RWPE1 (cell line): ENCODE measurements at regions of chr9 and their contacts with region 1.

Region 1: DNA sequence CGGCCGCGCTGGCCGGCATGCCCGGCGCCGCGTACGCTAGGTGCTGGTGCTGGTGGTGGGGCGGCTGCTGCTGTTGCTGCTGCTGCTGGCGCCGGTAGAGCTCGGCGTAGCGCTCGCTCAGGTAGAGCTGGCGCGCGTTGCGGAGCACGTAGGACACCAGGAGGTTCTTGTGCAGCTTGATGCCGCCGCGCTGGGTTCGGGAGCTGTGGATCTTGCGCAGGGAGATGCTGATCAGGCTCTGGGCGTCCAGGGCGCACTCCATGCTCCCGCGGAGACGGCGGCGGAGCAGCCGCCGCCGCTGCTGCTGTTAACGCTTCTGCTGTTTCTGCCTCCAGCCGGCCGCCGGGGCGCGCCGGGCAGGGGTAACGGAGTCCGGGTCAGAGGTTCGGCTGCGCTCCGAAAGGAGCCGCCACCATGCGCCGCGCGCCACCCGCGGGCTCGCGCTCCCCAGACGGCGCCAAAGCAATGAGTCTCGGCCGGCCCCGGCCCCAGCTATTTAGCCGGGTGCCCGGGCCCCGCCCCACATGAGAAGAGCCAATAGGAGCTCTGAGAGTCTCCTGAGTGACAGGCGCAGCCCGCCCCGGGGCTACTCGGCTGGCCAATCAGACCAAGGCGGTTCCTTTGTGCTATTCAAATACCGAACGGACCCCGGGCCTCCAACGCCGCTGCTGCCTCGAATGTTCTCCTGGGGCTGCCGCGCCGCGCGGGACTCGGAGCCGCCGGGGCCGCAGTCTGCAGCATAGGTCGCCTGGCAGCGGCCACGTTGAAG is at the start of gene IER5L:
- DNase-seq: peak; percentile 100
- H3K27ac ChIP-seq: peak within 1 kb of the TSS; percentile 99
- CTCF ChIP-seq: no peak

Region 2: GRCh38 chr9:129150672-129151211 is 27.2 kb before region 1 on chr9:
- CTCF ChIA-PET with region 1: interaction called, 63 read pairs
- POLR2A ChIA-PET with region 1: no interaction called
- DNase-seq: no peak
- H3K27ac ChIP-seq: peak overlapping the region; percentile 17; the same call in 1 of the 2 replicates
- CTCF ChIP-seq: no peak

Region 3: DNA sequence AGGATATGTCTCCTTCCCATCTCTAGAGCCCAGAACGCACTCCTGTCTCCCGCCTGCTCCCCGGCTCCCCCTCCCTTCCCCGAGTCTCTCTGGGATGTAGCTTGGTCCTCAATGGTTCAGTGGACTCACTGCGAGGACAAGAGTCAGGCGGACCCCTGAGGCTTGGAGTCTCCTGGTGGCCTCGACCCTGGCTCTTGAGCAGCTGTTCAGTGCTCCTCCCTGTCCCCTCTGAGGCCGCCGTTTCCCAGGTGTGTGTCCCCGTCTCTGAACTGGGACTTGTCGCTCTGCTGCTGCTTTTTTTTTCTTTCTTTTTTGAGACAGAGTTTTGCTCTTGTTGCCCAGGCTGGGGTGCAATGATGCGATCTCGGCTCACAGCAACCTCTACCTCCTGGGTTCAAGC is 44.8 kb after region 1 on chr9:
- CTCF ChIA-PET with region 1: no interaction called
- POLR2A ChIA-PET with region 1: no interaction called
- DNase-seq: no peak
- H3K27ac ChIP-seq: no peak overlapping the region
- CTCF ChIP-seq: no peak

Region 4: DNA sequence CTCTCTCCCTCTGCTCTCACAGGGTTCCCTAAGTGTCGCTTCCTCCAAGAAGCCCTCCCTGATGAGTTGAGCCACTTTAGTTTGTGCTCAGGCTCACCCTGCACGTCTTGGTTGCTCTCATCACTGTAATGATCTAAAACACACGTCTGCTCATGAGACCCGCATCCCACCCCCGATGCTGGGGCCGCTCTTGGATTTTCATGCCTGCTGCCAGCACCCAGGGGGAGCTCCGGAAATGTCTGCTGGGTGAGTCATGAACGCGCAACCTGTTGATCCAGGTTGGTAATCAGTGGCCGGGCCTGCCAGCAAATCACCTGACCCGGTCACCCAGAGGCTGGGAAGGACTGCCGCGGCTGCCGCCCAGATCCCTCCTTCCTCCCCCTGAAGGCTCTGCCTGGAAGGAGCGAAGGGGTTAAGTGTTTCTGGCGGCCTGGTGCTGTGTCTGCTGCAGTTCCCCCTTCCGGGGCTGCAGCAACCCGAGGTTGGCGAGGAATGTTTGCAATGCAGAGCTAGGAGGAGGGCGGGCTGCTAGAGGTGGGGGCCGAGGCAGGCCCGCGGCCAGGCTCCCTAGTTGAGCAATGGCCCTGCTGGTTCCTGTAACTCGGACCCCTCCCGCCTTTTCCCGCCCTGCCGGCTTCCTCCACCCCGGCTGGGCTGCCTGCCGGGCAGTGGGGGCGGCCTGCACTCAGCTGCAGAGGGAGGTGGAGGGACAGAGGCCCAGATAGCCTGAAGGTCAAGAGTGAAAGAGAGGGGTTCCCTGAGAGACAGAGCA is 156.2 kb after region 1 on chr9:
- CTCF ChIA-PET with region 1: interaction called, 14 read pairs
- POLR2A ChIA-PET with region 1: interaction called, 81 read pairs
- DNase-seq: peak; percentile 99
- H3K27ac ChIP-seq: peak overlapping the region; percentile 100
- CTCF ChIP-seq: no peak

Region 5: DNA sequence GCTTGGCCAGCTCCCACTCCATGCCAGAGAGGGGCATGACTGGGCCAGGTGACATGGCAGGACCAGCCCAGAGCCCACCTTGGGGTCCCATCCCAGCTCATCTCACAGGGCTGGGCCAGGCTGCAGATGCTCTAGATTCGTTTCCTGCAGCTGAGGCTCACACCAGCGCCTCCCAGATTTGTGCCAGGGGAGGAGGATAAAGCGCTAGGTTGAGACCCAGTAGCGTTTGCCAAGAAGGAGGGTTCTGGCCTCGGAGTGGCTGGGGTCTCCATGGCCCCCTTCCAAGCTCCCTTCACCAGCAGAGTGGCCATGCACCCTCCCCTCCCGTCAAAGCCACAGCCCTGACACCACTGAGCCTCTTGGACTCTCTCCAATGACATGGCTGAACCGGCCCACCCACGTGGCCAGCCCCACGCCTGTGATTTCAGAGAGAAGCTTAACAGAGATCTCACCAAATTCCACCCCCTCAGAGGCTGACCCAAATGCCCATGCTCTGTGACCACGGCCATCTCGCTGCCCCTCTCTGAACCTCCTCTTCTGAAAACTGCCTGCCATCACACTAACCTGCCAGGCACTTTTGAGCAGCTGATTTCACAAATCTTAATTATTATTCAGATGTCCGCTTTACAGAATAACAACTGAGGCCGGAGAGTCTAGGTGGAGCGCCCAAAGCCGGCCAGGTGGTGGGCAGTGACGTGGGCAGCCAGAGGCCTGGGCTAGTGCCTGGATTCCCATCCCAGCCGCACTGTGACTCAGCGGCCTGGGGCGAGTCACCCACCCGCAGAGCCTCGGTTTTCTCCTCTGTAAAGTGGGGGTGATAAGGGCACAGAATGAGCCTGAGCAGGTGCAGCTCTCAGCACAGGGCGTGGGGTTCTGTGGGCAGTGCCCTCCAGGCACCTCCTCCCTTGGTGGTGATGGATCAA is 287.2 kb after region 1 on chr9:
- CTCF ChIA-PET with region 1: no interaction called
- POLR2A ChIA-PET with region 1: no interaction called
- DNase-seq: no peak
- H3K27ac ChIP-seq: peak overlapping the region; percentile 22
- CTCF ChIP-seq: no peak

Region 6: GRCh38 chr9:129619787-129620668 is 442.1 kb after region 1 on chr9:
- CTCF ChIA-PET with region 1: interaction called, 18 read pairs
- POLR2A ChIA-PET with region 1: interaction called, 3 read pairs
- DNase-seq: no peak
- H3K27ac ChIP-seq: no peak overlapping the region
- CTCF ChIP-seq: peak; percentile 72

Region 7: DNA sequence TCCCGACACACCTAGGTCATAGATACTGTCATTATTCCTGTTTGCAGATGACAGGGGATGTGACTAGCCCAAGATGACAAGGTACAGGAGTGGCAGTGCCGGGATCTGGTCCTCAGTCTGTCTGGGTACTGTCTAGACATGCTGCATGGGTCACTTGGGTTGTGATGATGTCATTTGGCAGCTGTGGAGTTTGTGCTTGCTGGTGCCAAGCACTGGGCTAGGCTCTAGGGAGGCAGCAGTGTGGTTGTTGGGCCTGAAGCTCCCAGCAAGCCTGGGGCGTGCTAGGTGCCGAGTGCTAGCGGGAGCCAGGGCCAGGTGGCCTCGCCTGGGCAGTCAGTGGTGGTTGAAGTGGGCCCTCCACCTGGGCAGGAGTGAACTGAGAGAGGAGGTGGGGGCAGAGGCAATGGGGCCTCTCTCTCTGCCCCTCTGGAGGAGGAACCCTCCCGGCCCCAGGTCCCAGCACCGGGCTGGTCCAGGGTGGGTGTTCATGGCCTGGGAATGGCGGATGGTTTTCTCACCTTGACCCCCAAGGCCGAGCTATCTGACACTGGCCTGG is 472.8 kb after region 1 on chr9:
- CTCF ChIA-PET with region 1: no interaction called
- POLR2A ChIA-PET with region 1: no interaction called
- DNase-seq: no peak
- H3K27ac ChIP-seq: no peak overlapping the region
- CTCF ChIP-seq: no peak